Activated CD4-positive, alpha-beta T cell treated with anti-CD3 and anti-CD28 coated beads, Interleukin-2, amount 10 ng/mL, durations not matched to agents 7 days and 5 days (primary cell): ENCODE measurements at regions of chr11 and their contacts with region 1.

Region 1: GRCh38 chr11:66317723-66318599 is 1.1 kb upstream of the CD248 start:
- DNase-seq: peak; percentile 70
- H3K4me3 Mint-ChIP-seq: peak overlapping the region; percentile 42
- H3K27ac Mint-ChIP-seq: peak overlapping the region; percentile 97
- H3K4me1 Mint-ChIP-seq: peaks cover 72% of the 10 kb centered on the region
- H3K27me3 Mint-ChIP-seq: no peaks in the 10 kb centered on the region

Region 2: GRCh38 chr11:66268283-66268951 is 49.5 kb before region 1 on chr11 and contains the start of gene RAB1B:
- CTCF ChIA-PET with region 1: no interaction called
- POLR2A ChIA-PET with region 1: no interaction called
- DNase-seq: peak; percentile 100
- H3K4me3 Mint-ChIP-seq: peak within 1 kb of the TSS; percentile 88
- H3K27ac Mint-ChIP-seq: peak within 1 kb of the TSS; percentile 90
- H3K4me1 Mint-ChIP-seq: peaks cover 46% of the 10 kb centered on the region
- H3K27me3 Mint-ChIP-seq: no peaks in the 10 kb centered on the region
- total RNA-seq, gene RAB1B: 151 to 174 TPM

Region 3: DNA sequence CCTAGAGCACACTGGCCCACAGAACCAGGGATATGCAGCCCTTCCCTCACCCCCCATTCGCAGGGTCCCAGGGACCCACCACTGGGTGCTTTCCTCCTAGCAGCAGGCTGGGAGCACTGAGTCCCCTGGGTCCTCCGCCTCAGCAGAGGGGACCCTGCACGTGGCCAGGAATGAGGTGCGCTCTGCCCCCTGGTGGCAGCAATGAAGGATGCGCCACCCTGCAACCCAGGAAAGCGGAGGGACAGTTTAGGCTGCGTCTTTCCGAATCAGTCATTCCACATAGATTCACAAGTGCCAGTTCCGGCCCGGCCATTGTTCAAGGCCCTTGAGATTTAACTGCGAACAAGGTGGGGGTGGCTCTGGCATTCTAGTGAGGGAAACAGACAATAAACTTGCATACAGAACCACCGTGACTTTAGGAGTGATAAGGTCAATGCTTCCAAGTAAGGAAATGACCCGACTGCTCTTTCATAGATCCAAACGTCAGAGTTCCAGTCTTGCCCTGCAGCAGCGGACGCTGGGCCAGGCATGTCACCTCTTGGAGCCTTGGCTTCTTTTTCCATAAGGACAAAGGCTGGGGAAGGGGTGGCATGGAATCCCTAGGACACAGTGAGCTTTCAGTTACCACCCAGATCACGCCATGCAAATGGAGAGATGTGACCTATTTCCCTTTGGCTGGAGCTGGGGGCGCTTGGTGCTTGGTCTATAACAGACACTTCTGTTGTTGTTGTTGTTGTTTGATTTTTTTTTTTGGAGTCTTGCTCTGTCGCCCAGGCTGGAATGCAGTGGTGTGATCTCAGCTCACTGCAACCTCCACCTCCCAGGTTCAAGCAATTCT is 10.6 kb after region 1 on chr11:
- CTCF ChIA-PET with region 1: interaction called, 17 read pairs
- POLR2A ChIA-PET with region 1: no interaction called
- DNase-seq: peak; percentile 79
- H3K4me3 Mint-ChIP-seq: no peak overlapping the region
- H3K27ac Mint-ChIP-seq: peak overlapping the region; percentile 86
- H3K4me1 Mint-ChIP-seq: peaks cover 50% of the 10 kb centered on the region
- H3K27me3 Mint-ChIP-seq: no peaks in the 10 kb centered on the region